Naive thymus-derived CD4-positive, alpha-beta T cell (primary cell): ENCODE measurements at regions of chr21 and their contacts with region 1.

Region 1: GRCh38 chr21:46228345-46229051 is at the start of gene LSS:
- DNase-seq: peak; percentile 91 to 97 (median 96)
- ATAC-seq: peak; percentile 98
- H3K4me3 ChIP-seq: peak within 1 kb of the TSS; percentile 65
- H3K4me3 Mint-ChIP-seq: peak within 1 kb of the TSS; percentile 81 to 99 (median 94)
- H3K27ac ChIP-seq: peak within 1 kb of the TSS; percentile 83
- H3K27ac Mint-ChIP-seq: peak within 1 kb of the TSS; percentile 83 to 98 (median 94)
- H3K4me1 ChIP-seq: peaks cover 15 to 18% of the 10 kb centered on the region in 2 donors
- H3K4me1 Mint-ChIP-seq: peaks cover 17 to 56% (median 43%) of the 10 kb centered on the region in 7 donors
- H3K27me3 ChIP-seq: no peaks in the 10 kb centered on the region
- H3K27me3 Mint-ChIP-seq: no peaks in the 10 kb centered on the region
- total RNA-seq, gene LSS: 41.3 to 64.4 (median 44.9) TPM

Region 2: GRCh38 chr21:45019076-45019956 is 1209.2 kb before region 1 on chr21:
- CTCF ChIA-PET with region 1: no interaction called
- POLR2A ChIA-PET with region 1: no interaction called
- intact Hi-C with region 1: no loop called
- DNase-seq: peak in 1 of 9 donors; percentile 1
- ATAC-seq: no peak
- H3K4me3 ChIP-seq: no peak overlapping the region
- H3K4me3 Mint-ChIP-seq: peak overlapping the region in 9 of 10 donors; percentile 9 to 64 (median 47)
- H3K27ac ChIP-seq: no peak overlapping the region
- H3K27ac Mint-ChIP-seq: no peak overlapping the region
- H3K4me1 ChIP-seq: no peaks in the 10 kb centered on the region
- H3K4me1 Mint-ChIP-seq: peaks cover 2 to 8% (median 8%) of the 10 kb centered on the region in 7 donors
- H3K27me3 ChIP-seq: peaks cover 4 to 6% of the 10 kb centered on the region in 2 donors
- H3K27me3 Mint-ChIP-seq: peaks cover 27 to 53% (median 35%) of the 10 kb centered on the region in 5 donors

Region 3: DNA sequence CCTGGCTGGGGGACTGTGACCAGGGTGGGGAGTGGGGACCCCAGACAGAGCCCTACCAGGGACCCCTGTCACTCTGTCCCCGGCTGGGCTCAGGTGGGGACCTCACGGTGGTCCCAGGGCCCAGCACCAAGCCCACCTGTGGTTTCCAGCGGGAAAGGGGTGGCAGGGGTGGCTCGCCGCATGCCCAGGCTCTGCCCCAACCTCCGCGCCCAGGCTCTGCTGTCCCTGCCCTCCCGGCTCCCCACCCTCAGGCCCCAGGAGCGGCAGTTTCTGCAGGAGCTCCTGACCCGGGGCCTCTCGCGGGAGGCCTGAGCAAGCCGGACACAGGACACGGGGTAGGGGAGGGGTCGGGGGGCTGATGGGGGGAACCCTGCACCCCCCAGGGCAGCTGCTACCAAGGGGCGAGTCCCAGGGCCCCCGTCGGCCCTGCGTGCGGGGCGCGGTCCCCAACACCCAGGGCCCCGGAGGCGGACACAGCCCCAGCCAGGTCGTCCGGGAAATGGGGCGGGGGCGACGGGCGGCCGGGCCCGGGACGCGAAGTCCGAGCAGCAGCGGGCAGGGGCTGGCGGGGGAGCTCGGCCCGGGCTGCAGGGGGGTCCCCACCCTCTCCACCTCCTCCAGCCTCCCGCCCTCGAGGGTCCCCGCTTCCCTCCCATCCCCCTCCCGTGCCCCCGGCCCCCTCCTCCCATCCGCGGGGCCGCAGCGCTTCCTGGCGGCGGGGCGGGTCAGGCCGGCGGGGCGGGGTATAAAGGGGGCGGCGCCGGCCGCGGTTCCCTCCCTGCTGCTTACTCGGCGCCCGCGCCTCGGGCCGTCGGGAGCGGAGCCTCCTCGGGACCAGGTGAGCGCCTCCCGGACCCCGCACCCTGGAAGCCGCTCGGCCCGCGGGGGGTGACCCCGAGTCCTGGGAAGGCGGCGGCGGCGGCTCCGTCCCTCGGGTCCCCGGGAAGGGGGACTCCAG is 130.9 kb before region 1 on chr21 and contains the start of gene COL6A2:
- CTCF ChIA-PET with region 1: no interaction called
- POLR2A ChIA-PET with region 1: no interaction called
- intact Hi-C with region 1: loop called in 1 of 2 experiments (anchors 5 kb)
- DNase-seq: peak in 8 of 9 donors; percentile 35 to 67 (median 48)
- ATAC-seq: peak; percentile 87
- H3K4me3 ChIP-seq: no peak within 1 kb of the TSS
- H3K4me3 Mint-ChIP-seq: peak within 1 kb of the TSS; percentile 60 to 81 (median 71)
- H3K27ac ChIP-seq: peak within 1 kb of the TSS; percentile 57
- H3K27ac Mint-ChIP-seq: peak within 1 kb of the TSS in 6 of 9 donors; percentile 3 to 82 (median 31)
- H3K4me1 ChIP-seq: peaks cover 0 to 21% of the 10 kb centered on the region in 2 donors
- H3K4me1 Mint-ChIP-seq: peaks cover 0 to 18% (median 4%) of the 10 kb centered on the region in 7 donors
- H3K27me3 ChIP-seq: no peaks in the 10 kb centered on the region
- H3K27me3 Mint-ChIP-seq: peaks cover 0 to 34% (median 26%) of the 10 kb centered on the region in 5 donors
- total RNA-seq, gene COL6A2: 3.1 to 47.7 (median 40.3) TPM

Region 4: GRCh38 chr21:46171996-46172862 is 56.3 kb before region 1 on chr21:
- CTCF ChIA-PET with region 1: no interaction called
- POLR2A ChIA-PET with region 1: no interaction called
- intact Hi-C with region 1: loop called in 1 of 2 experiments (anchors 1 kb)
- DNase-seq: no peak
- ATAC-seq: no peak
- H3K4me3 ChIP-seq: no peak overlapping the region
- H3K4me3 Mint-ChIP-seq: no peak overlapping the region
- H3K27ac ChIP-seq: no peak overlapping the region
- H3K27ac Mint-ChIP-seq: peak overlapping the region in 2 of 9 donors; percentile 43 to 62
- H3K4me1 ChIP-seq: no peaks in the 10 kb centered on the region
- H3K4me1 Mint-ChIP-seq: peaks cover 4 to 10% (median 8%) of the 10 kb centered on the region in 7 donors
- H3K27me3 ChIP-seq: no peaks in the 10 kb centered on the region
- H3K27me3 Mint-ChIP-seq: peaks cover 0 to 23% (median 0%) of the 10 kb centered on the region in 5 donors

Region 5: GRCh38 chr21:46253610-46254124 is 25.2 kb after region 1 on chr21:
- CTCF ChIA-PET with region 1: no interaction called
- POLR2A ChIA-PET with region 1: no interaction called
- intact Hi-C with region 1: loop called in 1 of 2 experiments (anchors 2 kb)
- DNase-seq: peak in 8 of 9 donors; percentile 9 to 66 (median 37)
- ATAC-seq: peak; percentile 91
- H3K4me3 ChIP-seq: no peak overlapping the region
- H3K4me3 Mint-ChIP-seq: peak overlapping the region; percentile 36 to 72 (median 48)
- H3K27ac ChIP-seq: peak overlapping the region; percentile 22
- H3K27ac Mint-ChIP-seq: peak overlapping the region; percentile 56 to 92 (median 88)
- H3K4me1 ChIP-seq: peaks cover 11 to 14% of the 10 kb centered on the region in 2 donors
- H3K4me1 Mint-ChIP-seq: peaks cover 25 to 41% (median 40%) of the 10 kb centered on the region in 7 donors
- H3K27me3 ChIP-seq: no peaks in the 10 kb centered on the region
- H3K27me3 Mint-ChIP-seq: no peaks in the 10 kb centered on the region

Region 6: DNA sequence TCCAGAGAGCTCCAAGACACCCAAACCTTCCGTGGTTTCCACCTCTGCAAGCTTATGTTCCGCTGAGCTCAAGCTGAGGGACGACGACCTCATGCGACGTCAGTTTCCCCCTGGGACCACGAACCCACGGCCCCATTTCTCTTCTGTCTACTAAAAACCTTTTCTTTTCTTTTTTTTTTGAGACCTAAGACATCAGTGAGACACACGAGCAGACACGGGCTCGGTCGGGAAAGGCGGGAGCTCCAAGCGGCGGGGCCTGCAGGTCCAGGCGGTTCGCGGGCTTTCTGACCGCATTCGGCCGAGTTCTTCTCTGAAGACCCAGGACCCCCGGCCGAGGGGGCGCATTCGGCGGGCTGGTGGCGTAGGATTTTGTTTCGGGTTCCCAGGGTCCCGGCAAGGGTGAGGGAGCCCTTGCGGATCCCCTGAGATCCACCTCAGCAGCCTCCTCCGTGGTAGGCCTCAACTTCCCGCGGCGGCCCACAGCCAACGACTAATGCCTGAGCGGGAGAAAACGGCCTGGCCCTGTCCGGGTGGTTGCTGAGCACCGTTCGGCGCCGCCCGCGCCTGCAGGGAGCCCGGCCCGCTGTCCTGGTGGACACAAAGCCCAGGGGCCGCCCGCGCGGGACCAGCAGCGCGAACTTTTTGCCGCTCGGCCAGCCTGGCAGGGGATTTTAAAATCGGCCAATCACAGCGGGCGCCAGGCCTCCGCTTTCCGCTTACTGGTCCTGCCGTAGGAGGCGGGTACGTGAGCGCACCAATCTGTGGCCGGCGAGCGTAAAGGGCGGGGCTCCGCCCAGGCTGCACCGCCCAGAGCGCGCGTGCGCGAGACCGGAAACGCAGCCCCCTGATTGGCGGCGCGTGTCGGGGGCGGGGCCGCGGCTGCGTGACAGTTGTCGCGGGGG is 95.0 kb after region 1 on chr21 and contains the start of gene C21orf58:
- CTCF ChIA-PET with region 1: no interaction called
- POLR2A ChIA-PET with region 1: no interaction called
- intact Hi-C with region 1: loop called (anchors 1 kb)
- DNase-seq: peak; percentile 96 to 99 (median 98)
- ATAC-seq: peak; percentile 90
- H3K4me3 ChIP-seq: peak within 1 kb of the TSS; percentile 98
- H3K4me3 Mint-ChIP-seq: peak within 1 kb of the TSS; percentile 90 to 98 (median 96)
- H3K27ac ChIP-seq: peak within 1 kb of the TSS; percentile 97
- H3K27ac Mint-ChIP-seq: peak within 1 kb of the TSS; percentile 91 to 99 (median 97)
- H3K4me1 ChIP-seq: peaks cover 0 to 16% of the 10 kb centered on the region in 2 donors
- H3K4me1 Mint-ChIP-seq: peaks cover 14 to 44% (median 33%) of the 10 kb centered on the region in 7 donors
- H3K27me3 ChIP-seq: no peaks in the 10 kb centered on the region
- H3K27me3 Mint-ChIP-seq: no peaks in the 10 kb centered on the region
- total RNA-seq, gene C21orf58: 5.0 to 38.4 (median 9.0) TPM

Region 7: GRCh38 chr21:46345861-46346260 is 117.4 kb after region 1 on chr21:
- CTCF ChIA-PET with region 1: no interaction called
- POLR2A ChIA-PET with region 1: no interaction called
- intact Hi-C with region 1: no loop called
- DNase-seq: no peak
- ATAC-seq: no peak
- H3K4me3 ChIP-seq: no peak overlapping the region
- H3K4me3 Mint-ChIP-seq: no peak overlapping the region
- H3K27ac ChIP-seq: no peak overlapping the region
- H3K27ac Mint-ChIP-seq: peak overlapping the region in 1 of 9 donors; percentile 57
- H3K4me1 ChIP-seq: no peaks in the 10 kb centered on the region
- H3K4me1 Mint-ChIP-seq: peaks cover 6 to 15% (median 12%) of the 10 kb centered on the region in 7 donors
- H3K27me3 ChIP-seq: no peaks in the 10 kb centered on the region
- H3K27me3 Mint-ChIP-seq: no peaks in the 10 kb centered on the region

Region 8: GRCh38 chr21:46385846-46386733 is 157.6 kb after region 1 on chr21:
- CTCF ChIA-PET with region 1: no interaction called
- POLR2A ChIA-PET with region 1: no interaction called
- intact Hi-C with region 1: no loop called
- DNase-seq: no peak
- ATAC-seq: no peak
- H3K4me3 ChIP-seq: no peak overlapping the region
- H3K4me3 Mint-ChIP-seq: no peak overlapping the region
- H3K27ac ChIP-seq: no peak overlapping the region
- H3K27ac Mint-ChIP-seq: peak overlapping the region in 1 of 9 donors; percentile 73
- H3K4me1 ChIP-seq: no peaks in the 10 kb centered on the region
- H3K4me1 Mint-ChIP-seq: peaks cover 0 to 1% (median 0%) of the 10 kb centered on the region in 7 donors
- H3K27me3 ChIP-seq: no peaks in the 10 kb centered on the region
- H3K27me3 Mint-ChIP-seq: no peaks in the 10 kb centered on the region

Region 9: DNA sequence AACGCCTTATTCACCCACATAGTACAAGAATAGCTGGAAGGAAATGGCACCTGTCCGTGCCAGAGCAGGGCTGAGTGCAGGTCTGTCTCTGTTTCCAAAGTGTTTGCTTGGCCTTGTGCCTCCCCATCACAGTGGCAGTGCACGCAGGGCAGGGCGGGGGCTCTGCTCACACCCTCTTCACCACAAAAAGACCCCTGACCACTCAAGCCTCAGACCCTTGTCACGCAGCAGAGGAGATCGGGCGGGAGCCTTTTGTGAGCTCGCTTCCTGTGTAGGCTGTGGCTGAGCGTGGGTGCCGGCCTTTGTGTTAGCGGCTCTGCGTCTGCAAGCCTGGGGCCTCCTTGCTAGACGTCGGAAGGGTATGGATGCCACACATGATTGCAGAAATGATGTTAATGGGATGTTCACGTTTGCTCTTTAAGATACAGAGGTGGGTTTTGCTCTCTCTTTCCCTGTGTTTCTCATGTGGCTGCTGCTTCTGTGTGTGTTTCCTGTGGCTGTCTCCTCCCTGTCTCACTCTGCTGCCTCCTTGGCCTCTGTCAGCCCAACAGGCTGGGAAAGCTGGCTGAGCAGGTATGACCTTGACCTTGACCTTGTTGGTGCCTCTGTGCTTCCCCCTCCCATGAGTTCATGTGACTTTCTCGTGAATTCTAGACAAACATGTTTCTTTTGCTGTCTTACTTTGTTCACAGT is 330.9 kb after region 1 on chr21:
- CTCF ChIA-PET with region 1: no interaction called
- POLR2A ChIA-PET with region 1: no interaction called
- intact Hi-C with region 1: loop called in 1 of 2 experiments (anchors 5 kb)
- DNase-seq: peak; percentile 29 to 85 (median 76)
- ATAC-seq: peak; percentile 85
- H3K4me3 ChIP-seq: peak overlapping the region; percentile 24
- H3K4me3 Mint-ChIP-seq: peak overlapping the region; percentile 76 to 91 (median 82)
- H3K27ac ChIP-seq: peak overlapping the region; percentile 84
- H3K27ac Mint-ChIP-seq: peak overlapping the region; percentile 95 to 99 (median 97)
- H3K4me1 ChIP-seq: peaks cover 37 to 85% of the 10 kb centered on the region in 2 donors
- H3K4me1 Mint-ChIP-seq: peaks cover 39 to 95% (median 78%) of the 10 kb centered on the region in 7 donors
- H3K27me3 ChIP-seq: no peaks in the 10 kb centered on the region
- H3K27me3 Mint-ChIP-seq: no peaks in the 10 kb centered on the region